Right ventricle myocardium inferior (tissue), 1 donor: ENCODE measurements at regions of chr16 and their contacts with region 1.

Region 1: GRCh38 chr16:54422569-54422978 is 136.0 kb upstream of the IRX3 start:
- DNase-seq: no peak
- ATAC-seq: peak; percentile 29

Region 2: DNA sequence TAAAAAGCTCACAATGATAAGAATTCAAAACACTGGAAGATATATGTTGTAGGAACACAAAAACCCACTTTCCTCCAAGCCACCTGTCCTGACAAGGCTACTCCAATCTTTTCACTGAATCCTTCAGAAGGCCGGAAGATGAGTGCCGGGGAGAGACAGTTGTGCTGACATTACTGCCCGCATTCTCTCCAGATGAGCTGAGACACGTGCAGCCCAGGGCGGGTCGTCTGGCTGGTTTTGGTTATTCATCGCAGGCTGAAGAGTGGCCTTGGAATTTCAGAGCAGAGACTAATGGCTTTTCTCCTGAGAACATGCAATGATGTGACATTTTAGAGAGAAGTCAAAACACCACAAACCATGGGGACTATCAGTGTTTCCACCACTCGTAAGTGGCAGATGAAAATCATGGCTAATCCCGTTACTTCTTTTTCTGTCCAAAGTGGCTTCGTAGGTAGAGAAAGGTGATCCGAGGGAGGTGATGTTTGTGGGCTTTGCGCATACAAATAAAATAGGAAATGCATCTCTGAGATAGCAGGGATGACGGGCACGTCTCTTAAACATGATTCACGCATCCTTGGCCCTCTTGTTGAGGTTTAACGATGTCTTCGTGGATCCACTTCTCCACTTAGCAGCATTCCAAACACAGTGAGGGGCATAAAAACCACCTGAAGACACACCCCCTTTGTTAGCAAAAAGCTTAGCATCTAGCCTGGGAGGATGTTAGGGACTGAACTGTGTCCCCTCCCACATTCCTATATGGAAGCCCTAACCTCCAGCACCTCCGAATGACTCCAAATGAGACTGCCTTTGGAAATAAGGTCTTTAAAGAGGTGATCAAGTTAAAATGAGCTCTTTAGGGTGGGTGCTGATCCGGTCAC is 270.0 kb before region 1 on chr16:
- intact Hi-C with region 1: no loop called
- DNase-seq: no peak
- ATAC-seq: no peak

Region 3: GRCh38 chr16:54482892-54483574 is 60.5 kb after region 1 on chr16:
- intact Hi-C with region 1: loop called (anchors 2 kb)
- DNase-seq: no peak
- ATAC-seq: peak; percentile 81

Region 4: DNA sequence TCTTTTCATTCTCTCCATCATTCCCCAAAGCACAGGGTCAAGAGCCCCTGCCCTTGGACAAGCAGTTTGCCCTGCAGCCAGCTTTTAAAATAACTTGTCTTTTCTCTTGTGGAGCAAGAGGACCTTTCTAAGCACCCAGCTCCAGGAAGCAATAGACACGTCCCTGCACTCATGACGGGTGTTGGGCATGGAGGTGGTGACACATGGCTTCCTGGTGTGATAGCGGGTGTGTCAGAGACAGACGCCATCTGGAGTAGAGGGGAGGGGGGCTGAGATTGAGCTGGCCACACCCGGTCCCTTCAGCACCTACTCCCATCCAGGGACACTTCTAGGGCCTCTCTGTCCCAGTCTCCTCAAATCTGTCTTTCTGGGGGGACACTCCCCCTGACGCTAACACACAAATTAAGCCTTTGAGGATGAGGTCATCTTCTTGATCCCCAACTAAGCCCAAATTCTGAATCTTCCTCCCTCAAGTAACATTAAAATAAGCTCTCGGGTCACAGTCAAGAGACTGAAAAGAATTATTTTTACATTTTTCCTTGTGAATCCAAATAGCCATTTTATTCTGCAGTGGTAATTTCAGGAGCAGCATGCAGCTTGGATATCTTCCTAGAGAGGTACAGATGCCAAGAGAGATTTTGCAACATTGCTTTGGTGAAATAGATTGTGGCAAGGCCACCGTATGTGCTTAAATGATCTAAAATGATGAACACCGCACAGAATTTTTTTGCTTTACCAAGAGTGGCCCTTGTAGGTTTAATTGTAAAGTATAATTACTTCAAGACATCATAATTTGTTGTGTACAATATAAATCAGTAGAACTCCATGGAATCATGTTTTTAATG is 80.7 kb after region 1 on chr16:
- intact Hi-C with region 1: loop called (anchors 5 kb)
- DNase-seq: peak; percentile 75
- ATAC-seq: peak; percentile 97

Region 5: DNA sequence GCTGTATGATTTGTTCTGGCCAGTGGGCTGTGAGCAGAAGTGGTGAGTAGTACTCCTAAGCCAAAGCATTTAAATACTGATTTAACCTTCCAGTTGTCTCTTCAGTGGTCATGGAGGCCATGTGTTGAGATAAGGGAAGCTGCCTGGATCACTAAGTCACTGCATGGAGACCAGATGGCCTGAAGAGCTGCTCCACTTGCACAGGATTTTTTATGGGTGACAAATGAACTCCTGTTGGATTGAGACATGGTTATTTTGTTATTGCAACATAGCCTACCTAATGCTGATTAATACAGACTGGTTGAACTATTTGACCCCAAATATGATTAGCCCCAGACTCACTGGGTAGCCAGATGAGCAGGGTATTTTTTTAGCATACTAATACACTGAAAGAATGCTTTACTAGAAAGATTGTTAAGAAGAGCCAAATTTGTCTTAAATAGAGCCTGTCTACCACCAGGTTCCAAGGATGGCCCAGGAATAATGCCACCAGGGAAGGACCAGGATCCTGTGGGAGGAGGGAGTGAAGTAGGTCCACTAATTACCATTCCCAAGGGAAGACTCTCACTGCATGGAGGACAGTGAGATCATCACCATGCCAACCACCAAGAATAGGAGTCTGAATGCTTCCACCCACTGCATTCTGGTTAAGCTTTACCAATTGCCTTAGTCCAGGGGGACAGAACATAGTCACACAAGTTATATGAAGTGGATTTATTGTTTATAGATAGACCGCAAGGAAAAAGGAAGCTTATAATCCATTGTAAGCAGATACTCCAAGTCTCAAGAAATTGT is 714.0 kb after region 1 on chr16:
- intact Hi-C with region 1: no loop called
- DNase-seq: no peak
- ATAC-seq: no peak